ENCODE measurements at regions of chr10 and their contacts with region 1.

Region 1: DNA sequence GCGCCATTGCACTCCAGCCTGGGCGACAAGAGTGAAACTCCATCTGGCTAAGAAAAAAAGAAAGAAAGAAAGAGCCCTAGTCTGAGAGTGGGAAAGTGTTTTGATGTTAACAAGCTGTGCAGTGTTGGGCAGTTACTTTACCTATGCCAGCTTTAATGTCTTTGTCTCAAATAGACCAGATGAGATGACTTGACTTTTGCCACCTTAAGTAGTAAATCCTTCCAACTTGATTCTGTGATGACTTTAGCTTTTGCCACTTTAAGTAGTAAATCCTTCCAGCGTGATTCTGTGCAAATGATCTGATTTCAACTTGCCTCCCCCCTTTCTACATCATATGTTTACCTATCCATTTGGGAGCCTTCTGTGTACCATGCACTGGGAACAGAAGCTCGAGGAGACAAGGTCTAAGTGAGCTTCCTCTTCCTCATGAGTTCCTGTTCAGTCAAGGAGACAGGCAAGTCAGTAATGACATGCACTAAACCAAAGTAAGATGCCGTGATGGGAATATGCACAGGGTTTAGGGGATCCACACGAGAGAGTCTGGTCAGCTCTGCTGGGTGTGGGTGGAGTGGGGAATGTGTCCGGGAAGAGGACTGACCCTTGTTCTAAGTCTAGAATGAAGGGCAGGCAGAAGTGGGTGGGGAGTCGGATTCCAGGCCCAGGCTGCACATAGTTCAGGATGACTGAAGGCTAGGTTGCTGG is 17.2 kb downstream of the INPP5F start:
- DNase-seq: no peak
- H3K4me3 ChIP-seq: no peak overlapping the region
- H3K27ac ChIP-seq: no peak overlapping the region
- H3K4me1 ChIP-seq: peaks cover 2 to 5% (median 5%) of the 10 kb centered on the region in 3 donors
- H3K27me3 ChIP-seq: no peaks in the 10 kb centered on the region
- CTCF ChIP-seq: no peak
- POLR2A ChIP-seq: no peak

Region 2: GRCh38 chr10:119859420-119860258 is 116.5 kb after region 1 on chr10:
- intact Hi-C with region 1: loop called (anchors 10 kb)
- DNase-seq: no peak
- H3K4me3 ChIP-seq: no peak overlapping the region
- H3K27ac ChIP-seq: no peak overlapping the region
- H3K4me1 ChIP-seq: peaks cover 0 to 21% (median 3%) of the 10 kb centered on the region in 3 donors
- H3K27me3 ChIP-seq: no peaks in the 10 kb centered on the region
- CTCF ChIP-seq: peak; percentile 43 to 69 (median 54)
- POLR2A ChIP-seq: no peak

Measured in esophagus squamous epithelium (tissue), 5 donors.